ENCODE measurements at regions of chr2 and their contacts with region 1.

Region 1: GRCh38 chr2:65186872-65187851 is 40.5 kb upstream of the ACTR2 start:
- DNase-seq: peak; percentile 92
- H3K4me3 ChIP-seq: no peak overlapping the region
- H3K27ac ChIP-seq: no peak overlapping the region
- H3K4me1 ChIP-seq: peaks cover 0 to 10% (median 6%) of the 10 kb centered on the region in 4 donors
- H3K27me3 ChIP-seq: no peaks in the 10 kb centered on the region
- CTCF ChIP-seq: peak; percentile 79 to 88 (median 79)
- EP300 ChIP-seq: no peak
- POLR2A ChIP-seq: no peak

Region 2: GRCh38 chr2:65064728-65065552 is 122.2 kb before region 1 on chr2:
- intact Hi-C with region 1: loop called (anchors 5 kb)
- DNase-seq: no peak
- H3K4me3 ChIP-seq: peak overlapping the region in 1 of 4 donors; percentile 4
- H3K27ac ChIP-seq: peak overlapping the region; percentile 19 to 68 (median 42)
- H3K4me1 ChIP-seq: peaks cover 87 to 95% (median 91%) of the 10 kb centered on the region in 4 donors
- H3K27me3 ChIP-seq: no peaks in the 10 kb centered on the region
- CTCF ChIP-seq: peak; percentile 61 to 78 (median 72)
- EP300 ChIP-seq: peak; percentile 27
- POLR2A ChIP-seq: no peak

Region 3: GRCh38 chr2:65092791-65093190 is 94.4 kb before region 1 on chr2:
- intact Hi-C with region 1: no loop called
- DNase-seq: no peak
- H3K4me3 ChIP-seq: no peak overlapping the region
- H3K27ac ChIP-seq: no peak overlapping the region
- H3K4me1 ChIP-seq: peaks cover 0 to 24% (median 10%) of the 10 kb centered on the region in 4 donors
- H3K27me3 ChIP-seq: no peaks in the 10 kb centered on the region
- CTCF ChIP-seq: no peak
- EP300 ChIP-seq: no peak
- POLR2A ChIP-seq: no peak

Region 4: DNA sequence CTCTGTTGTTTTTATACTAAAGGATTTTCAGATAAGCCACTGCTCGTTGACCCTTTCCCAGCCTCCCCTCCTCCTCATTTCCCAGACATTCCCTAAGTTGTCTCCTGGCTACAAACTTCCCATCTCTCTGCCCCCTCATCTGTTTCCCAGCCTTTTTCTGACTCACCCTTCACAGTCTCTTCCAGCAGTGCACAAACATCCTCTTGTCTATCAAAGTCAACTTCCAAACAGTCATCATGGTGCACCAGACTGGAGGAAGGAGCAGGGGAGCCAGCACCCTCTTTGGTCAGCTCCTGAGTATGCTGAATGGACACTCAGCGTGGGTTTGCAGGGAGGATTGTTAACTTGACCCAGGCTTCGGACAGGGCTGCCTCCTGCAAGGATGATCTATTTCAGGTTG is 271.8 kb after region 1 on chr2:
- intact Hi-C with region 1: no loop called
- DNase-seq: no peak
- H3K4me3 ChIP-seq: no peak overlapping the region
- H3K27ac ChIP-seq: no peak overlapping the region
- H3K4me1 ChIP-seq: no peaks in the 10 kb centered on the region
- H3K27me3 ChIP-seq: no peaks in the 10 kb centered on the region
- CTCF ChIP-seq: no peak
- EP300 ChIP-seq: no peak
- POLR2A ChIP-seq: no peak